ENCODE measurements at regions of chr5 and their contacts with region 1.

Region 1: GRCh38 chr5:77076961-77077823 is 9.9 kb downstream of the ZBED3 start:
- DNase-seq: peak; percentile 47
- H3K4me3 Mint-ChIP-seq: peak overlapping the region; percentile 59
- H3K27ac Mint-ChIP-seq: no peak overlapping the region
- H3K4me1 Mint-ChIP-seq: peaks cover 5% of the 10 kb centered on the region
- H3K27me3 Mint-ChIP-seq: no peaks in the 10 kb centered on the region

Region 2: DNA sequence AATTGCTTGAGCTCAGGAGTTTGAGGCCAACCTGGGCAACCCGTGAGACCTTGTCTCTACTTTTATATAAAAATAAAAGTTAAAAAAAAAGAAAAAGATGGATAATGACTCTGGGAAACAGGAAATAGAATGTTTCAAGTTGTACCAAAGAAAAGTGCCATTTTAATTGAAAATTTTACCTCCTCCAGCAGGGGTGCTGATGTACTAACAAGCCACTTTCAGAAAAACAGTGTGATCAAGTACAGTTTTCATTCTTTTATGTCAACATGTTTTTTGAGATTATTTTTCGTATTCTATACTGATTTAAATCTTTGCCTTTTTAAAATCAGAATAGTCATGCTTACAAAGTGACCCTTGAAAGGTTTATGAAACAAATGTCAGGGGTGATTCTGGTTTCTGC is 330.5 kb before region 1 on chr5:
- intact Hi-C with region 1: no loop called
- DNase-seq: no peak
- H3K4me3 Mint-ChIP-seq: no peak overlapping the region
- H3K27ac Mint-ChIP-seq: no peak overlapping the region
- H3K4me1 Mint-ChIP-seq: peaks cover 2% of the 10 kb centered on the region
- H3K27me3 Mint-ChIP-seq: peaks cover 9% of the 10 kb centered on the region

Region 3: GRCh38 chr5:77030097-77031071 is 46.8 kb before region 1 on chr5 and contains the start of gene AGGF1:
- intact Hi-C with region 1: loop called (anchors 5 kb)
- DNase-seq: peak; percentile 90
- H3K4me3 Mint-ChIP-seq: peak within 1 kb of the TSS; percentile 98
- H3K27ac Mint-ChIP-seq: peak within 1 kb of the TSS; percentile 92
- H3K4me1 Mint-ChIP-seq: peaks cover 22% of the 10 kb centered on the region
- H3K27me3 Mint-ChIP-seq: peaks cover 7% of the 10 kb centered on the region
- total RNA-seq, gene AGGF1: 25.6 and 28.2 TPM in 2 replicates

Measured in activated T-helper 2 cell treated with anti-CD3 and anti-CD28 coated beads, Interferon-gamma antibody, Interleukin-2, Interleukin-4, amounts not matched to agents 10 μg/mL and 5 μg/mL and 100 μg/mL, durations not matched to agents 14 hours and 24 hours and 36 hours (primary cell).